ENCODE measurements at regions of chr11 and their contacts with region 1.

Region 1: GRCh38 chr11:36746886-36747710 is 149.1 kb upstream of the RAG2 start:
- DNase-seq: peak; percentile 92
- ATAC-seq: peak; percentile 100
- H3K4me3 ChIP-seq: no peak overlapping the region
- H3K27ac ChIP-seq: no peak overlapping the region
- H3K4me1 ChIP-seq: no peaks in the 10 kb centered on the region
- H3K27me3 ChIP-seq: peaks cover 5% of the 10 kb centered on the region
- CTCF ChIP-seq: peak; percentile 100
- POLR2A ChIP-seq: no peak
- RAD21 ChIP-seq: peak; percentile 77

Region 2: GRCh38 chr11:36702330-36703055 is 44.6 kb before region 1 on chr11:
- CTCF ChIA-PET with region 1: interaction called, 34 read pairs
- POLR2A ChIA-PET with region 1: no interaction called
- dilution Hi-C with region 1: no loop called
- in situ Hi-C with region 1: loop called (anchors 5 kb)
- intact Hi-C with region 1: loop called (anchors 1 kb)
- DNase-seq: peak; percentile 69
- ATAC-seq: peak; percentile 91
- H3K4me3 ChIP-seq: no peak overlapping the region
- H3K27ac ChIP-seq: no peak overlapping the region
- H3K4me1 ChIP-seq: no peaks in the 10 kb centered on the region
- H3K27me3 ChIP-seq: peaks cover 7% of the 10 kb centered on the region
- CTCF ChIP-seq: peak; percentile 81
- POLR2A ChIP-seq: no peak
- RAD21 ChIP-seq: peak; percentile 80

Region 3: GRCh38 chr11:36729825-36730224 is 17.3 kb before region 1 on chr11:
- CTCF ChIA-PET with region 1: interaction called, 21 read pairs
- POLR2A ChIA-PET with region 1: no interaction called
- dilution Hi-C with region 1: no loop called
- in situ Hi-C with region 1: no loop called
- intact Hi-C with region 1: no loop called
- DNase-seq: no peak
- ATAC-seq: no peak
- H3K4me3 ChIP-seq: no peak overlapping the region
- H3K27ac ChIP-seq: no peak overlapping the region
- H3K4me1 ChIP-seq: no peaks in the 10 kb centered on the region
- H3K27me3 ChIP-seq: no peaks in the 10 kb centered on the region
- CTCF ChIP-seq: no peak
- POLR2A ChIP-seq: no peak
- RAD21 ChIP-seq: no peak

Measured in IMR-90 (cell line).